T-cell (primary cell): ENCODE measurements at regions of chr22 and their contacts with region 1.

Region 1: DNA sequence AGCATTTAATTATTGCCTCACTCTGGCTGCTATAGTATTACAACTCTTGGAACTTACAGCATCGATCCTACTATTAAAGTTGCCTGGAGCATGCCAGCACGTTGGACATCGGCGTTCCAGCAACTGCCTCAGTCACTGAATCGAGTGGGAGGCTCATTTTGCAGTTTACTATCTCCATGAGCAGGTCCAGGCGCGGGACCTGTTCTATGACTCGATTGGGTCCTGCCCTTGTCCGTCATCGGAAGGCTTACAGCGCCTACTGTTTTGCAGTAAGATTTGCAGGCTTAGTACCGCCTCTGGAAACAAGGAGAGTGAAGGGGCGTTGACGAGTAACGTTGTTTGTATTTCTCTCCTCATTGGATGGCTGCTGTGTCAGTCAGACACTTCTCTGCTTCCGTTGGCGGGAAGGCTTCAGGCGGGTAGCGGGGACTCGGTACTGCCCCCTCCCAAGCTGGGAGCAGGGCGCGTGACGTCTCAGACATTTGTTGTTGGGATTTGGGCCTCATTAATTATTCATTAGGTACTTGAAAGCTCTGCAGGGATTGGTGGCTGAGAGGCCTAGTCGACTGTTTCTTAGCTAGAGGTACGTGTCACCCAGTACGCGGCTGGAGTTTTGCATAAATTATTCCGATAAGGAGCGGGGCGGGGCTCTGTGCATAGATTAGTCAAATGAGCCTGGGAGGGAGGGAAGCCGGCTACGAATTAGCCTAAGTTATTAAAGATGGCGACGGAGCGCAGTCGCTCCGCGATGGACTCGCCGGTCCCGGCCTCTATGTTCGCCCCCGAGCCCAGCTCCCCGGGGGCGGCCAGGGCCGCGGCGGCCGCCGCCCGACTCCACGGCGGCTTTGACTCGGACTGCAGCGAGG is at the start of gene GTPBP1:
- DNase-seq: peak; percentile 88 to 100 (median 97)
- ATAC-seq: peak; percentile 78 to 85 (median 79)
- H3K4me3 ChIP-seq: peak within 1 kb of the TSS; percentile 67 to 92
- H3K4me3 Mint-ChIP-seq: peak within 1 kb of the TSS; percentile 89 to 90 (median 90)
- H3K27ac ChIP-seq: peak within 1 kb of the TSS; percentile 79
- H3K27ac Mint-ChIP-seq: peak within 1 kb of the TSS; percentile 92 to 95
- H3K4me1 ChIP-seq: peaks cover 29 to 51% of the 10 kb centered on the region in 2 experiments
- H3K4me1 Mint-ChIP-seq: peaks cover 48 to 58% (median 53%) of the 10 kb centered on the region in 3 donors
- H3K27me3 ChIP-seq: no peaks in the 10 kb centered on the region
- H3K27me3 Mint-ChIP-seq: no peaks in the 10 kb centered on the region
- total RNA-seq, gene GTPBP1: 79.1 to 229 (median 83.3) TPM

Region 2: GRCh38 chr22:36823186-36823839 is 1882.2 kb before region 1 on chr22:
- CTCF ChIA-PET with region 1: no interaction called
- POLR2A ChIA-PET with region 1: no interaction called
- DNase-seq: no peak
- ATAC-seq: no peak
- H3K4me3 ChIP-seq: no peak overlapping the region
- H3K4me3 Mint-ChIP-seq: no peak overlapping the region
- H3K27ac ChIP-seq: no peak overlapping the region
- H3K27ac Mint-ChIP-seq: no peak overlapping the region
- H3K4me1 ChIP-seq: no peaks in the 10 kb centered on the region
- H3K4me1 Mint-ChIP-seq: peaks cover 0 to under 1% (median 0%) of the 10 kb centered on the region in 3 donors
- H3K27me3 ChIP-seq: peaks cover 0 to 43% of the 10 kb centered on the region in 2 experiments
- H3K27me3 Mint-ChIP-seq: peaks cover 49 to 52% of the 10 kb centered on the region in 2 donors

Region 3: GRCh38 chr22:38681784-38682335 is 23.6 kb before region 1 on chr22 and contains the start of gene TOMM22:
- CTCF ChIA-PET with region 1: interaction called, 3 to 17 read pairs
- POLR2A ChIA-PET with region 1: interaction called, 5 to 8 read pairs
- DNase-seq: peak; percentile 54 to 90 (median 77)
- ATAC-seq: peak; percentile 94 to 98 (median 97)
- H3K4me3 ChIP-seq: peak within 1 kb of the TSS; percentile 96
- H3K4me3 Mint-ChIP-seq: peak within 1 kb of the TSS; percentile 95 to 97 (median 96)
- H3K27ac ChIP-seq: peak within 1 kb of the TSS; percentile 86
- H3K27ac Mint-ChIP-seq: peak within 1 kb of the TSS; percentile 94
- H3K4me1 ChIP-seq: peaks cover 5 to 17% of the 10 kb centered on the region in 2 experiments
- H3K4me1 Mint-ChIP-seq: peaks cover 19 to 24% (median 23%) of the 10 kb centered on the region in 3 donors
- H3K27me3 ChIP-seq: peaks cover 0 to 4% of the 10 kb centered on the region in 2 experiments
- H3K27me3 Mint-ChIP-seq: no peaks in the 10 kb centered on the region
- total RNA-seq, gene TOMM22: 52.4 to 58.1 (median 53.3) TPM

Region 4: DNA sequence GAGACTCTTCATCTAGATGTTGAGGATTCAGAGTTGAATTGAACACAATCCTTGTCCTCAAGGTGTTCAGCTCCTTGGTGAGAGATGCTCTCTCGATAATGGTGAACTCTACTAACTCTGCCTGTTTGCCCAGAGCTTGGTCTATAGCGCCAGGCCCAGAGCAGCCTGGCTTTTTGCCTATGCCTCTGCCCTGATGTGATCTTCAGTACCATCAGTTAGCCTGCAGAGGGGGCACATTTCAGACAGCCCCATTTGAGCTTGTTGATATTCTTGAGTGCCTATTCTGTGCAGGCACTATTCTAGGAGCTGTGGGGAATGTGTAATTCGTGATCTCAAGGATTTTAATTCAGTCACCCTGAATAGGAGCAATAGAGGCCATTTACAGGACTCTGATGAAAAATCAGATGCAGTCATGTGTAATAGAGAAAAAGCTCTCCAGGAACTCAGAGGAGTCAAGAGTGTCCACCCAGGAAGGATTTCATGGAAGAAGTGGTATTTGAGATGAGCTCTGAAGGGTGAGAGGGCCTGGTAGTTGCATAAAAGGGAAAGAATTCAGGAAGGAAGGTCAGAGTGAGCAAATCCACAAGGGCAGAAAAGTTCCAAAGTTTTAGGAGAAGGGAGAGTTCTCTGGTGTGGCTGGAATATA is 19.6 kb after region 1 on chr22:
- CTCF ChIA-PET with region 1: interaction called, 3 to 10 read pairs
- POLR2A ChIA-PET with region 1: interaction called in 1 of 2 experiments, 4 read pairs
- DNase-seq: peak in 27 of 35 experiments; percentile 19 to 69 (median 35)
- ATAC-seq: peak; percentile 58 to 81 (median 65)
- H3K4me3 ChIP-seq: no peak overlapping the region
- H3K4me3 Mint-ChIP-seq: no peak overlapping the region
- H3K27ac ChIP-seq: no peak overlapping the region
- H3K27ac Mint-ChIP-seq: peak overlapping the region; percentile 83 to 84
- H3K4me1 ChIP-seq: peaks cover 0 to 8% of the 10 kb centered on the region in 2 experiments
- H3K4me1 Mint-ChIP-seq: peaks cover 8 to 11% (median 11%) of the 10 kb centered on the region in 3 donors
- H3K27me3 ChIP-seq: no peaks in the 10 kb centered on the region
- H3K27me3 Mint-ChIP-seq: no peaks in the 10 kb centered on the region

Region 5: DNA sequence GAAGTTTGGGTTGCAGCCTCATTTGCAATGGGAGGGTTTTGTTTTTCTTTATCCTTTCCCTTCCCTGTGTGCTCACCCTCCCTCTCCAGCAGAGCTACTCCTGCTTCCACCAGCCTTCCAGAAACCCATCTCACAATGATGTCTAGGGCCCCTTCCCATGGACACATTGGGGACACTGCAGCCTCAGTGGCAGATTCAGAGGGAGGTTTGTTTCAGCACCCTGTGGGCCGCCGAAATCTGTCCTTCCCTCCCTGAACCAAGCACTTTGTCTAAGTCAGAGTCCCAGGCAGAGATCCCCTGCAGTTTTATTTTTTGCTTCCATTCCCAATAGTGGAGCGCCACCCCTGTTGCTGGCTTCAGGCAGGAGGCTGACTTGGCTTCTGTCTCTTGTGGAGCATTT is 635.7 kb after region 1 on chr22:
- CTCF ChIA-PET with region 1: no interaction called
- POLR2A ChIA-PET with region 1: no interaction called
- DNase-seq: no peak
- ATAC-seq: no peak
- H3K4me3 ChIP-seq: no peak overlapping the region
- H3K4me3 Mint-ChIP-seq: no peak overlapping the region
- H3K27ac ChIP-seq: no peak overlapping the region
- H3K27ac Mint-ChIP-seq: no peak overlapping the region
- H3K4me1 ChIP-seq: no peaks in the 10 kb centered on the region
- H3K4me1 Mint-ChIP-seq: peaks cover 4 to 7% (median 5%) of the 10 kb centered on the region in 3 donors
- H3K27me3 ChIP-seq: peaks cover 0 to 8% of the 10 kb centered on the region in 2 experiments
- H3K27me3 Mint-ChIP-seq: peaks cover 0 to 9% of the 10 kb centered on the region in 2 donors